Sciatic nerve (tissue), 2 donors: ENCODE measurements at regions of chr2 and their contacts with region 1.

Region 1: DNA sequence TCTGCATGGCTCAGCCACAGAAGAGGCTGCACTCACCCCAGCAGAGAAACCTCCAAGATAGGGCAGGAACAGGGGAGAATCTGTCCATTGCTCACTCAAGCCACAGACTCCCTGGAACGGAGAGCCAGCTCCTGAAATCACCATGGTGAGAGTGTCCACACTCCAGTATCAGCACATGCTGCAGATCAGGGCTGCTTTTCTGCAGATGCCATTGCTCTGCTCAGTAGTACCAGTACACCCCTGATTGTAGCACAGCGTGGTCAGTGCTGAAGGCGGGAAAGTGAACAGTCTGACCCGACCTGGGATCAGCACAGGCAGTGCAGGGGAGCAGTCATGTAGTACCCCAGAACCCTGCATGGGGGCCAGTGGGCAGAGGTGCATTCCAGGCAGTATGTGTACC is 73.9 kb downstream of the GYPC start:
- DNase-seq: no peak
- ATAC-seq: no peak

Region 2: DNA sequence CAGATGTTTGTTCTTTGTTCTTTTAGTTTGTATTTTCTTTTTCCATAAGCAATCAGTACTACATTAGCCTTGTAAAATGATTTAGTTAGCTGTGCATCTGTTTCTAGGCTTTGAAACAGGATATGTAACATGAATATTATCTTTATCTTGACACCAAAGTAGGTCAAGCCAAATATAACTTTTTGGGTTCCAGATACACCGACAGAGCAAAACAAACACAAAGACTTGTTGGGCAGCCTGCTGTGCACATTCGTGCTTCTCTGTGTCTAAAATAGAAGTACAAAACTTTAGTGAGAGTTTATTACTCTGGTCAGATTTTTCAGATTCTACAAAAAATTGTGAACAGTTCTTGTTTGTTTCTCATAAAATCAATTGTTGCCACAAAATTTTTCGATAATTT is 1133.3 kb before region 1 on chr2:
- intact Hi-C with region 1: no loop called
- DNase-seq: no peak
- ATAC-seq: no peak

Region 3: DNA sequence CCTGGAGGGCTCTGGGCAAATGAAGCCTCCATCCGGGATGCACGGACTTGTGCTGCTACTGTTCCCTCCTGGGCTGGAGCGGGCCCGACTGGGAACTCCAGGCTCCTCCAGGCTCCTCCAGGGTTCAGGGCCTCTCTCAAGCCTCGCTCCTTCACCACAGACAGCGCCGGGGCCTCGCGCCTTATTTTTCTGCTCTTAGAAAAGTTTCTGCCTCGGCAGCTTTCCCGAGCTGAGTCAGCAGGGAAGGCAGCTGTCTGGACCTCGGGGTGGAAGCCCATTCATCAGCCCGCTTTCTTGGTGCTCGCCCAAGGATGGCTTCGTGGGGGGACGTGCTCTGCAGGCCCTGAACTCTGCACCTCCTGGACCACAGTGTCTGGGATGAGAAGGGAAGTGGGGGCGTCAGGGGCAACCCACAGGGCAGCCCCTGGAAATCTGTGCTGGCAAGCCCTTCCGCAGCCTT is 155.9 kb after region 1 on chr2:
- intact Hi-C with region 1: no loop called
- DNase-seq: peak; percentile 76
- ATAC-seq: peak; percentile 81

Region 4: DNA sequence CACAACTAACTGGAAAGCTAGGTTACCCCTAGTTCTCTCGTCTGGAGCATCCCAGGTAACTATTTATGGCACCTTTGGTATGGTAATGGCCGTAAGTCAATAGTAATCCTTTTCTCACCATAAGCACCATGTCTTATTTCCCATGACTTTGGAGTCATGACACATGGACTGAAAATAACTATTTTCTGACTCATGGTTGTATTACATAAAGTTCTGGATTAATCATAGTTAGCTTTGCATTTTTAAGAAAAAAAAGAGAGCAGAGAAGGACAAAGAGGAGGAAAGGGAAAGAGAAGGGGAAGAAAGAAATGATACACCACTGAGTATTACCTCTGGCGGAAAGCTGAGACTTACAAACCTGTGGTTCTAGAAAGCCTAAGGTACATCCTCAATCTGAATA is 277.8 kb after region 1 on chr2:
- intact Hi-C with region 1: no loop called
- DNase-seq: no peak
- ATAC-seq: no peak

Region 5: GRCh38 chr2:128299628-128300027 is 1569.7 kb after region 1 on chr2:
- intact Hi-C with region 1: loop called (anchors 5 kb)
- DNase-seq: no peak
- ATAC-seq: no peak